ENCODE measurements at regions of chr5 and their contacts with region 1.

Region 1: GRCh38 chr5:151002250-151002649 is 18.1 kb upstream of the GPX3 start:
- DNase-seq: peak; percentile 70
- ATAC-seq: peak; percentile 62
- H3K4me3 ChIP-seq: no peak overlapping the region
- H3K27ac ChIP-seq: no peak overlapping the region
- H3K4me1 ChIP-seq: no peaks in the 10 kb centered on the region
- H3K27me3 ChIP-seq: no peaks in the 10 kb centered on the region
- CTCF ChIP-seq: peak; percentile 71

Region 2: GRCh38 chr5:150918613-150919012 is 83.6 kb before region 1 on chr5:
- CTCF ChIA-PET with region 1: no interaction called
- POLR2A ChIA-PET with region 1: no interaction called
- intact Hi-C with region 1: no loop called
- DNase-seq: no peak
- ATAC-seq: no peak
- H3K4me3 ChIP-seq: no peak overlapping the region
- H3K27ac ChIP-seq: no peak overlapping the region
- H3K4me1 ChIP-seq: no peaks in the 10 kb centered on the region
- H3K27me3 ChIP-seq: no peaks in the 10 kb centered on the region
- CTCF ChIP-seq: no peak

Region 3: GRCh38 chr5:151023651-151024050 is 21.4 kb after region 1 on chr5:
- CTCF ChIA-PET with region 1: interaction called, 16 read pairs
- POLR2A ChIA-PET with region 1: interaction called, 3 read pairs
- intact Hi-C with region 1: loop called (anchors 1 kb)
- DNase-seq: peak; percentile 95
- ATAC-seq: peak; percentile 90
- H3K4me3 ChIP-seq: 0 out of 2 replicates have a peak overlapping the region, but pooled peaks have one; percentile 12
- H3K27ac ChIP-seq: peak overlapping the region; percentile 93
- H3K4me1 ChIP-seq: peaks cover 31% of the 10 kb centered on the region
- H3K27me3 ChIP-seq: no peaks in the 10 kb centered on the region
- CTCF ChIP-seq: no peak

Region 4: DNA sequence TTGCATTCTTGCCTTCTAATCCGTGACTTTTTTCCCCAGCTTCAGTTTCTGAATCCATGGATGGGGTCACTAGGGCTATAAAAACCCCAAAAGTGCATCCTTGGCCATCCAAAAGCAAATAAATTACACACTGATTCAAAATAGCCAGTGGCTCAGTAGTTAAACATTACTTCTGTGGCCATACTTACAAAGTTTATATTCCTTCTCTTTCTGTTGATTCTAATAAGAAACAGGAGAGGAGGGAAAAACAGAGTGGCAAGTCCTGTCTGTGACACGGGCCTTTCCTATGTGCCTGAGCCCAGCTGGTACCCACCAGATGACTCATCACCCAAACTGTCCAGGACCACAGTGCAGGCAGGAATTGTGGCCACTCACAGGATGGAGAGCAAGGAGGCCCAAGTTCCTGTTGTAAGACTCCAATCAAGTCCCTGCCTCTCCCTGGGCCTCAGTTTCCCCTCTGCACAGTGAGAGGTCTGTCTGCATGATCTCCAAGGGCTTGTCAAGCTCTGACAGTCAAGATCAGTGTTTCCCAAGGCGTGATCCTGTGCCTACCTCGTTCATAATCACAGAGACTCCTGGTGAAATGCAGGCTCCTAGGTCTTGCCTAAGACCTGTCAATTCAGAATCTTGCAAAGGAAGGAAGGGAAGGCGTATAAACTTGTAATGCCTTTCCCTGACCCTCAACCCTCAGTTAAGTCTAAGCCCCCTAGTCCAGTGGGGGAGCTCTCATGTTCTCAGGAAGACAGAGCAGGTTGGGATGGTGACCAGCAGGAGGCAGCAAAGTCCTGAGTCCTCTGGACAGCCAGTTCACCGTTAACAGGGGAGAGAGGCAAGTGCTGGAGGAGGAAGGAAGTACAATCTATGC is 49.0 kb after region 1 on chr5:
- CTCF ChIA-PET with region 1: interaction called, 11 read pairs
- POLR2A ChIA-PET with region 1: no interaction called
- intact Hi-C with region 1: loop called (anchors 1 kb)
- DNase-seq: peak; percentile 84
- ATAC-seq: peak; percentile 78
- H3K4me3 ChIP-seq: no peak overlapping the region
- H3K27ac ChIP-seq: no peak overlapping the region
- H3K4me1 ChIP-seq: no peaks in the 10 kb centered on the region
- H3K27me3 ChIP-seq: no peaks in the 10 kb centered on the region
- CTCF ChIP-seq: peak; percentile 97

Region 5: DNA sequence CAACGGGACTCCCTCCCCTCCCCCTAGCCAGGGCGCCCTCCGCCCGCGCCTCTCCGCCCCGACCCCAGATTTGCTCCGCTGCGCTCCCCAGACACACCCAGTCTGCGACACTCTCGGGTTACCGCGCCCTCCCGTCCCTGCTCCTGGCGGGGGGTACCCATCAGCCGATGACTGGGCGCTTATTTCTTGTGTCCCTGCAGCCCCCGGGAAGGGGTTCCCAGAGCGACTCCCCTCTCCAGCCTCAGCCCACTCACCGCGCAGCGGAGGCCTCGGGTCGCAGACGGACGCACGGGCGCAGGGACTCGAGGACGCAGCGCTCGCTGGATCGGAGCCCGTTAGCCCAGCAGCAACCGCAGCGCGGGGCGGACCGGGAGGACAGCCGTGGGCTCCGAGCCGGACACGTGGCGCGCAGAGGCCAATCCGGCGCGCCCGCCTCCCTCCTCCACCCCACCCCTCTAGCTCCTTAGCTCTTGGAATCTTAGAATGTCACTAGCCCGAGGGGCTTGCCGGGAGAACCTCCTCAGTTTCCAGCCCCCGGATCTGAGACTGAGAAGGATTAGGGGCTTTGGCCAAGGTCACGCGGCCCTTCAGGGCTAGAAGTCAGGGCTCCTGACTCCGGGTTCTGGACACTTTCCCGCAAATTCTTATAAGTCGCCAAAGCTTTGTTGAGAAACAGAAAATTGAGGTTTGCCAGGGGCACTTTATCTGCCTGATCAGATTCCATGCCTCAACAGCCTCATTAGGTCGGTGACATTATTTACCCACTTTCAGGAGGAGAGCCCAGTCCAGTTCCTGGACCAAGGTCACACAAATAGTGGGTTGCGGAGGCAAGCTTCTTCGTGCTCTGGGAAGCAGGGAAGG is 155.4 kb after region 1 on chr5 and contains the start of gene ANXA6:
- CTCF ChIA-PET with region 1: no interaction called
- POLR2A ChIA-PET with region 1: interaction called, 15 read pairs
- intact Hi-C with region 1: no loop called
- DNase-seq: peak; percentile 88
- ATAC-seq: peak; percentile 97
- H3K4me3 ChIP-seq: peak within 1 kb of the TSS; percentile 67
- H3K27ac ChIP-seq: no peak within 1 kb of the TSS
- H3K4me1 ChIP-seq: peaks cover 28% of the 10 kb centered on the region
- H3K27me3 ChIP-seq: no peaks in the 10 kb centered on the region
- CTCF ChIP-seq: no peak
- total RNA-seq, gene ANXA6: 122 and 131 TPM in 2 replicates

Measured in PC-3 (cell line).